HEK293 (cell line): ENCODE measurements at regions of chr12 and their contacts with region 1.

Region 1: GRCh38 chr12:108664338-108665258 is 30.9 kb upstream of the SELPLG start:
- H3K4me3 ChIP-seq: no peak overlapping the region
- H3K27ac ChIP-seq: no peak overlapping the region
- H3K4me1 ChIP-seq: no peaks in the 10 kb centered on the region
- CTCF ChIP-seq: peak; percentile 70

Region 2: GRCh38 chr12:108649669-108650068 is 14.9 kb before region 1 on chr12:
- CTCF ChIA-PET with region 1: interaction called, 13 read pairs
- POLR2A ChIA-PET with region 1: no interaction called
- H3K4me3 ChIP-seq: no peak overlapping the region
- H3K27ac ChIP-seq: no peak overlapping the region
- H3K4me1 ChIP-seq: peaks cover 9% of the 10 kb centered on the region
- CTCF ChIP-seq: no peak

Region 3: DNA sequence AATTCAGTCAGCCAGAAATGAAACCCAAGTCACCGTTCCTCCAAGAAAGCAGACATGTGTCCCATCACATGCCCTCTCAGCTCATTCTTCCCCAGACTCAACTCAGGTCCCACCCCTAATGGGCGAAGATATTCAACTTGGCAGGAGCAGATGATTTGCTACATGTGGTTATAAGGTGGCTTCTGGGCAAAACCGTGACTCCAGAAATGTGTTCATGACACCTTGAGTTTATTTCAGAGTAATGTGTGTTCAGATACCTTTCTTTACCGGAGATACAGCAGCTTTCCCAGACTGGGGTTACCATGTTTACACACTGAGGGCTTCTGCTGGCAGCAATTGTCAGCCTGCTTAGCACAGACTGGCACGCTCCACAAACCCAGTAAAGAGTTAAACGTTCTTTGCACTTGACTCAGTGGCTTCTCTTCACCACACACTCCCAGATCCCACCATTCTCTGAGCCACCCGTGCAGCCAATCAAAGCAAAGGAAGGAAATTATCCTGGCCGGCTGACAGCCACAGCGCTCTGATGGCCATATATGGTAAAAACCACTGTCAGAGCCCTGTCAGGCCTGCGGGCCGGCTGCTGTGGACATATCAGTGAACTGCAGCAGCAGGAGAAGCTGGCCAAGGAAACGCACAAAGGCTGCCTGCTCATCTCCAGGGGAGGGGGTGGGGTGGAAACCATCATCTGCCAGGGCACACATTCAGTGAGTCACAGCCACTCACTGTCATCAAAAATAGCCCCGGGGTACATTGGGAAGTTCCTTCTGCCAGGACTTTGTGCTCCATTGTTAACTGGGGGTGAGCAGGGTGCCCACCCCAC is 26.8 kb after region 1 on chr12:
- CTCF ChIA-PET with region 1: interaction called, 18 read pairs
- POLR2A ChIA-PET with region 1: interaction called, 3 read pairs
- H3K4me3 ChIP-seq: peak overlapping the region; percentile 12; the same call in 1 of the 2 replicates
- H3K27ac ChIP-seq: peak overlapping the region; percentile 78
- H3K4me1 ChIP-seq: peaks cover 30% of the 10 kb centered on the region
- CTCF ChIP-seq: peak; percentile 50; the same call in 1 of the 2 replicates

Region 4: GRCh38 chr12:108731105-108731865 is 66.7 kb after region 1 on chr12 and contains the start of gene CORO1C:
- CTCF ChIA-PET with region 1: interaction called, 7 read pairs
- POLR2A ChIA-PET with region 1: interaction called, 10 read pairs
- H3K4me3 ChIP-seq: peak within 1 kb of the TSS; percentile 65
- H3K27ac ChIP-seq: peak within 1 kb of the TSS; percentile 89
- H3K4me1 ChIP-seq: peaks cover 22% of the 10 kb centered on the region
- CTCF ChIP-seq: peak; percentile 93

Region 5: DNA sequence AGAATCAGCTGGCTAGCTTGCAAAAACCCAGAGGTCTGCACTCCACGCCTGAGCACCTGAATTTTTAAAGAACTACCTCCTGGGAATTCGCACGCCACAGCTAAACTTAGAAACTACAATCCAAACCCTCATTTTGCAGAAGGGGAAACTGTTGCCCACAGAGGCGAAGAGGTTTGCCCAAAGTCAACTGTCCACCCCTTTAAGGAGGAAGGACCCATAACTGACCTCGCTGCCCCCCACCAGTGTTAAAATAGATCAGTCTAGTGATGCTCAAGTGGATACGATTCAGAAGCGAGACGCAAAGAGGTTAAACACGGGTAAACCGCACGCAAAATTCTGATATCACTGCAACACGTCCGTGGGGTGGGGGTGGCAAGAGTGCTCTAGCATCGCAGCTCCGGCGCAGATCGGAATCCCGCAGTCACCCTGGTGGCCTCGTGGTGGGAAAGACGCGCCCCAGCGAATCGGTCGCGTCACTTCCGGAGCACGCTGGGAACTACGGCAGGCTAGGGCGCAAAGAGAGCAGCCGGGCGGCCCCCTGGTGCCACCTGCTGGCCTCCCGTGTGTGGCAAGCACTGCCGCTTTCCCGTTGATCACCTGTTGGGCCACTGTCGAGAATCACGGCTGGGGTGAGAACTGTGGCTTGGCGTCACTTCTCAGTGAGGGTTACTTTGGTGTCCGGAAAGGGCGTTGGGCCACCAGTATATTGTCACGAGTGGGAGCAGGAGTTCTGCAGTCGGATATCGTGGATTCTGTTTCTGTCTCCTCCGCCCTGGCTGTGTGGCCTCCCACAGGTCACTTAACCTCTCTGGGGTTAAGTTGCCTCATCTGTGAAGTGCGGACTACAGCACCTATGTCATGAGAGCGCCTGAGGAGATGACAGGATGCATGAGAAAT is 428.7 kb after region 1 on chr12 and contains the start of gene ALKBH2:
- CTCF ChIA-PET with region 1: interaction called, 13 read pairs
- POLR2A ChIA-PET with region 1: no interaction called
- H3K4me3 ChIP-seq: peak within 1 kb of the TSS; percentile 32
- H3K27ac ChIP-seq: no peak within 1 kb of the TSS; the same call in 1 of the 2 replicates
- H3K4me1 ChIP-seq: no peaks in the 10 kb centered on the region
- CTCF ChIP-seq: peak; percentile 99